ENCODE measurements at regions of chr10 and their contacts with region 1.

Region 1: DNA sequence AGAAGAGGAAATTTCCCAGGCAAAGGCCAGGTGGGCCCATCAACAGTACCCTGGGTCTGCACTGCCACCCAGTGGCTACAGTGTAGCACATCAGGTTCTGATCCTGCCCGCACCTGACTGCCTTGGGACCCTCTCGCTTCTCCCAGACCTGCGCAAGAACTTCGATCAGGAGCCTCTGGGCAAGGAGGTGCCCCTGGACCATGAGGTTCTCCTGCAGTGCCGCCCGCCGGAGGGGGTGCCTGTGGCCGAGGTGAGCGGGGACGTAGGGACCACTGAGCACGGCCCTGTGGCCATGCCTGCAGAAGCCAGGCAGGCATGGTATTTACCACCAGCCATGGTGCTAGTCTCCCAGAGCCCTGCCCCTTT is 33.9 kb upstream of the SLC29A3 start:
- DNase-seq: peak; percentile 45 to 76
- H3K4me3 ChIP-seq: no peak overlapping the region
- H3K4me1 ChIP-seq: no peaks in the 10 kb centered on the region
- H3K27me3 ChIP-seq: no peaks in the 10 kb centered on the region

Region 2: GRCh38 chr10:70903262-70903921 is 381.8 kb before region 1 on chr10:
- in situ Hi-C with region 1: loop called (anchors 5 kb)
- DNase-seq: peak; percentile 28 to 72
- H3K4me3 ChIP-seq: no peak overlapping the region
- H3K4me1 ChIP-seq: no peaks in the 10 kb centered on the region
- H3K27me3 ChIP-seq: no peaks in the 10 kb centered on the region

Region 3: DNA sequence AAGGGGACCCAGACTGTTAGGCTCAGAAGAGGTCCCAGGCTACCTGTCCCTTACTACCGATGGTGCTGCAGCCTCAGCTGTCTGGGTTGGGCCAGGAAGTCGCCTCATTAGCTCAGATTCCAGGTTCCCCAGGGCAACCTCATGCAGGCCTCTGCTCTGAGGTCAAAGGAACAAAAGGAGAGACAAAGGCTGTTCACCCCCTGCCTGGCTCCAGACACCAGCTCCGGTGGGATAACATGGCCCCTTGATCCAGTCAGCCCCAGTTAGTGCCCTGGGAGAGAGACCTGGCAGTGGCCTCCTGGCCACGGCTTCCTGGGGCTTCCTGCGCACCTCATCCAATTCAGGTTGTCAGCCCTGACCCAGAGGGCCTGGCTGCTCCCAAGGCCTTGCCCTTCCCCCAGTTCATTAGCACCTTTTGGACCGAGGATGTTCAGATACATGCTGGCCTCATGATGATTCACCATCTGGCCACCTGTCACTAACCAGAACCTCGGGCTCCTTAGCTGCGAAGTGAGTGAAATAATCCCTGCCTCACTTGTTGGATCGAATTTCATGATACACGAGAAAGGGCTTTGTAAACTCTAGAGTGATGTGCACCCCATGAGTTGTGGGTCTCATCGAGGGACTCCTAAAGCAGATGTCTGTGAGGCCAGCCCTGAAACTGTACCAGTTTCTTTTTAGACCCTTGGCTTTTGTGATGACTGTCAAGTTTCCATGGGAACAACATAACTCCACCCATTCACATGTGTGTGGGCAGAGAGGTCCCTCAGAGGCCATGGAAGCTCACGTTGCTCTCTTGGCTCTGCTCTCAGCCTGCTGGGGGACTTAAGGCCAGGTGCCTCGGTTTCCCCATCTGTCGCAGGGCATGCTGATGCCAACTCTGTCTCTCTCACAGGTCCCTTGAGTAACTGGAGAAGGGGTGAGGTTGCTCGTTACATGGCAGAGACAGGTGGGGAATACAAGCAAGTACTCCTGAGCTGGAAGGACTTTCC is 317.3 kb before region 1 on chr10:
- in situ Hi-C with region 1: no loop called
- DNase-seq: no peak
- H3K4me3 ChIP-seq: no peak overlapping the region
- H3K4me1 ChIP-seq: no peaks in the 10 kb centered on the region
- H3K27me3 ChIP-seq: peaks cover 2% of the 10 kb centered on the region; the same call in 1 of the 2 replicates

Measured in HAP-1 (cell line).